ENCODE measurements at regions of chr1 and their contacts with region 1.

Region 1: DNA sequence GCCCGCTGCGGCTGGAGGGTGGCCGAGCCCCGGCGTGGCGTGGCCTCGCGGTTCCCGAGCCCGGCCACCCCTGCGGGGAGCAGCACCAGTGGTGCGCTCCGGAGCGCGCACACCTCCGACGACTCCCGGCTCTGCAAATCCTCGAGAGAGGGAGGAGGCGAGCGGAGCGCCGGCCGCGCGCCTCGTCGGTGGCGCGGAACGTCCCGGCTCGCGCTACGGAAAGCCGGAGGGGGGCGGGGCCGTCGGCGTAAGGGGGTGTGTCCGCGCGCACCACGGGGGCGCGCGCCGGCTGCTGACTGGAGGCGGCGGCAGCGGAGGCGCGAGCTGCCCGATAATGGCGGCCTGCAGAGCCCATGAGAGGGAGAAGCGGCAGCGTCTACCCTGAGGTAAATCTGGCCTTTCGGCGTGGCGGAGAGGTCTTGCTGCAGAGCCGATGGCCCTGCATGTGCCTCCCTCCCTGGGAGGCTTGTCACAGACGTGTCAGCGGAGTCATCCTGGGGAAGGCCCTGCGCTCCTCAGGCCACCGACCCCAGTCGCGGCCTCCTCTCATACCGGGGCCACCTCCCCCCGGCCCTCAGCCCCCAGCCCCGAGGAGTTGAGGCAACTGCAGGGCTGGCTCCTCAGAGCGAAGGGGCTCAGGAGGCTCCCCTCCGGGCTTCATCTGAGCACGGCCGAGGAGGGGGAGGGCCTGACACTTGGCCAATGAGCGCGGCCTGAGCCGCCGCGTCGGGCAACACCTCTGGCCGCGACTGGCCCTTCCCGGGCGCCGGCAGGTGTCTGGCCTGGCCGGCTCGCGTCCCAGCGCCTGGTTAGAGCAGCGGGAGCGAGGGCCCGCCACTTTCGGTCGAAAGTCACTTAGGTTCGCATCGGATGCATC is at the start of gene PDIK1L:
- DNase-seq: peak; percentile 95 to 97
- ATAC-seq: peak; percentile 89 to 93 (median 90)
- H3K4me3 ChIP-seq: peak within 1 kb of the TSS; percentile 98
- H3K27ac ChIP-seq: peak within 1 kb of the TSS; percentile 96
- H3K4me1 ChIP-seq: peaks cover 29% of the 10 kb centered on the region
- H3K27me3 ChIP-seq: no peaks in the 10 kb centered on the region
- CTCF ChIP-seq: no peak
- total RNA-seq, gene PDIK1L: 3.1 to 7.0 (median 5.3) TPM

Region 2: DNA sequence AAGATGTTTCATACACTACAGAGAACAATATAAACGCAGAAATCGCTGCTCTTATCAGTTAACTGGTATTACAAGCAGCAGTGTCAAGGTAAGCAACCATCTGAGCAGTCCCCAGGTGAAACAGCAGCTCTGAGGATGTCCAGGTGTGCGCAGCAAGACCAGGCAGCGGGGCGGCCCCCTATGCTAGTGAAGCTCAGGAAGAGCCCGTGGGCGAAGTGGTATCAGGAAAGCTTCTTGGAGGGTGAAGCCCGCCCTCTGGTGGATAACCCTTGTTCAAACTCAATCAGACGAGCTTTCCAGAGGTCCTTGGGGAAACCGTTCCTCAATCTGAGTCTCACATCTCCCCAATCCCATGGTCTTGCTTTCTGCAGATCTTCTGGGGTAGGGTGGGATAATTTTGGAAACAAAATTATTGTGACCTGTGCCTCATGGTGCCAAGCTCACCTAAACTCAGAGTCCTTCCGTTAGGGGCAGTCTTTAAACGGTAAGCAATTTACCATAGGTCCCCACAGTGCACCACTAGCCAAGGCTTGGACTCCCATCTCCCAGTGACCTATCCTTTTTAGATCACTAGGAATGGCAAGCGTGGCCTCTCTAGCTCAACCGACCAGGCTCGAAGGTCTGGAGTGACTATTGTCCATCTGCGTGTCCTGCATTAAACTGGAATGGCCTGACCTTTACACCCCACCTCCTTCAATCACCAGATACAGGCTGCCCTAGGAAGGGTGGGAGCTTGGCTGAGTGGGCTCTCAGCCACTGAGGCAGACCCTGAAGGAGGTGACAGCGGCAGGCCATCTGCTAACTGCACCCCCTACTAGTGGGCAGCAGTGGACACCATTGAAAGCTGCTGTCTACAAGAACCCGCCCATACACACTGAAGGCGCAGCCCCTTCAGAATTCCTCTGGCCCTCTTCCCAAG is 33.5 kb after region 1 on chr1:
- intact Hi-C with region 1: loop called in 1 of 2 experiments (anchors 1 kb)
- DNase-seq: peak; percentile 76 to 86
- ATAC-seq: peak; percentile 93 to 98 (median 96)
- H3K4me3 ChIP-seq: no peak overlapping the region
- H3K27ac ChIP-seq: no peak overlapping the region
- H3K4me1 ChIP-seq: no peaks in the 10 kb centered on the region
- H3K27me3 ChIP-seq: no peaks in the 10 kb centered on the region
- CTCF ChIP-seq: peak; percentile 85

Region 3: GRCh38 chr1:26161415-26162219 is 49.8 kb after region 1 on chr1:
- intact Hi-C with region 1: loop called in 1 of 2 experiments (anchors 5 kb)
- DNase-seq: peak; percentile 69 to 88
- ATAC-seq: peak; percentile 78 to 87 (median 86)
- H3K4me3 ChIP-seq: peak overlapping the region; percentile 81
- H3K27ac ChIP-seq: peak overlapping the region; percentile 83
- H3K4me1 ChIP-seq: peaks cover 13% of the 10 kb centered on the region
- H3K27me3 ChIP-seq: no peaks in the 10 kb centered on the region
- CTCF ChIP-seq: peak; percentile 29

Region 4: DNA sequence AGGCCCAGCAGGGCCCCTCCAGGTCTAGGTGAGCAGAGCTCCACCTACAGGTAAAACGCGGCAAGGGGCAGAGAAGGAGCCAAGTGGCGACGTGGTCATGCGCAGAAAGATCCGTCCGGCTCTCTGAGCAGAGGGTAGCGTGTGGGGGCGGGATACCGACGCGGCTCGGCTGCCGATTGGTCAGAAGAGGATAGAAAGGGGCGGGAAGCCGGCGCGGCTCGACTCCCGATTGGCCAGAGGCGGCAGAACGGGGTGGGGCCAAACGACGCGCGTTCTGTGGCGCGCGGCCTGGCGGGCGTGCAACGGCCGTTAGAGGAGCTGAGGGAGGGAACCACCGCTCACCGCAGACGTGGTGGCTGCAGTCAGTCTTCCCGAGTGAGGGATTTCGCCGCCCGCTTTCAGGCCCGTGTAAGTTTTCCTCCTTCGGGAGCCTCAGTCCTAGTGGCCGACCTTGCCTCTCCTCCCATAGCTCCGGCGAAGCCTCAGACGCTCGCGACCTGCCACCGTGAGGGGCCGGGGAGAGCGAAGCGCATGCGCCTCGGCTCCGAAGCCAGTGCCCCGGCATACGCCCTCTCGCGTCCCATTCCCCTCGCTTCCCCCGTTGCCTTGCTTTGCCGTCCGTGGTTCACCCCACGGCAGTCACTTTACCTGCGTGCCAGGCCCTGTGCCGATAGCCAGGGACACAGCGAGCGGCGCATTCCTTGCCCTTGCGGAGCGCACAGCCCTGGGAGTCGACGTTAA is 122.3 kb after region 1 on chr1 and contains the start of gene CEP85:
- intact Hi-C with region 1: loop called in 1 of 2 experiments (anchors 10 kb)
- DNase-seq: peak; percentile 97 to 99
- ATAC-seq: peak; percentile 94 to 99 (median 97)
- H3K4me3 ChIP-seq: peak within 1 kb of the TSS; percentile 74
- H3K27ac ChIP-seq: peak within 1 kb of the TSS; percentile 89
- H3K4me1 ChIP-seq: peaks cover 20% of the 10 kb centered on the region
- H3K27me3 ChIP-seq: no peaks in the 10 kb centered on the region
- CTCF ChIP-seq: peak; percentile 81
- total RNA-seq, gene CEP85: 16.0 to 52.5 (median 41.1) TPM

Region 5: DNA sequence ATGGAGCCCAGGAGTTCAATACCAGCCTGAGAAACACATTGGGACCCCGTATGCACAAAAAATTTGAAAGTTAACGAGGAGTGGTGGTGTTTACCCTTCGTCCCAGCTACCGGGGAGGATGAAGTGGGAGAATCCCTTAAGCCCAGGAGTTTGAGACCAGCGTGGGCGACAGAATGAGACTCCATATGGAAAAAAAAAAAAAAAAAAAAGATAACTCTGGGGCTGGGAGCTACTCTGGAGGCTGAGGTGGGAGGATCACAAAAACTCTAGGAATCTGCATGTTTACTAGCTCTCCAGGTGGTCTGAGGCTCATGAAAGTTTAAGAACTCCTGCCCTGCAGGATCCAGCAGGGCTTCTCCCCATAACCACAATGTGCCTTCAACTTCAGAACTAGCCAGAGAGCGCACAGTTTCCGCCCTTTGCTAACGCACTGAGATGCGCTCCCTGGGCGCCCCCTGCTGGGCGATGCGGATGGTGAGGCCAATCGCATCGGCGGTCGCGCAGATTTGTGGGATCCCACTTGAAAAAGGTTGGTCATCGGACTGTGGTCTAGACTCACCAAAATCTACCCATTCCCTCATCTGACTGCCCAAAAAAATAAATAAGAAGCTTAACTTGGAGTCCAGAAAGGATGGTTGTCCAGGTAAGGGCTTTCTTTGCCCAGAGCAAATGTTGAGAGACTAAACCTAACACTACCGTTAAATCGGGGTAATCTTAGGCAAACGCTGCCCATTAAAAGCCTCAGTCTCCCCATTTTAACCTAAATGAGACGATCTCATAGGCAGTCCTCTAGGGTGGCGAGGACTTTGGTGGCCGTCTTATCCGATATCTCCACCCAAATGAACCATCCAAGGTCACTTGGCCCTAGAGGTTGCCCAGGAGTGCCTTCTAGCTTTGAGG is 252.0 kb after region 1 on chr1:
- intact Hi-C with region 1: no loop called
- DNase-seq: peak; percentile 80 to 83
- ATAC-seq: peak; percentile 63 to 84 (median 77)
- H3K4me3 ChIP-seq: no peak overlapping the region
- H3K27ac ChIP-seq: no peak overlapping the region
- H3K4me1 ChIP-seq: no peaks in the 10 kb centered on the region
- H3K27me3 ChIP-seq: peaks cover 0 to 54% (median 15%) of the 10 kb centered on the region in 3 donors
- CTCF ChIP-seq: peak; percentile 85